GM10248 (cell line): ENCODE measurements at regions of chr9 and their contacts with region 1.

Region 1: GRCh38 chr9:69155341-69156030 is 18.6 kb upstream of the TJP2 start:
- DNase-seq: peak; percentile 65
- CTCF ChIP-seq: no peak

Region 2: DNA sequence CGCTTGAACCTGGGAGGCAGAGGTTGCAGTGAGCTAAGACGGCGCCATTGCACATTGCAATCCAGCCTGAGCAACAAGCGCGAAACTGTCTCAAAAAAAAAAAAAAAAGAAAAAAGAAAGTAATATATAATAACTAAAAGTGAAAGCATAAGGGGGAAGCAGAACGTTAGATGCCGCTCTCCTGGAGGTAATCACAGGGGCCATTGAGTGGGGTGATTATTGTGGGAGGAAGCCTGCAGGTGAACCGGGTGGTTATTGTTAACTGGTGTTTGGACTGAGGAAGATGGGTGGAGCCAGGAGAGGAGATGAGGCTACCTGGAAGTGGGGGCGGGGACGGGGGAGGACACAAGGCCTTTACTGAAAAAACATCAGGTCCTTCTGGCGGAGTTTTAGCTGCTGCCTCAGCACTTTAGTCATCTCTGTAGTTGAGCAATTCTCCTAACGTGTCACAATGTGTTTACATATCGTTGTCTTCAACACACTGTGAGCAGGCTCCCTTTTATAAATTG is 13.3 kb after region 1 on chr9:
- CTCF ChIA-PET with region 1: interaction called, 10 read pairs
- POLR2A ChIA-PET with region 1: no interaction called
- DNase-seq: peak; percentile 69
- CTCF ChIP-seq: no peak